Right ventricle myocardium inferior (tissue), 1 donor: ENCODE measurements at regions of chr7 and their contacts with region 1.

Region 1: GRCh38 chr7:876167-876967 is at the start of gene GET4:
- DNase-seq: peak; percentile 98
- ATAC-seq: peak; percentile 85
- total RNA-seq, gene GET4: 19.1 TPM

Region 2: GRCh38 chr7:322111-322671 is 554.2 kb before region 1 on chr7:
- intact Hi-C with region 1: loop called (anchors 10 kb)
- DNase-seq: peak; percentile 85
- ATAC-seq: peak; percentile 85

Region 3: GRCh38 chr7:542713-543500 is 333.5 kb before region 1 on chr7:
- intact Hi-C with region 1: no loop called
- DNase-seq: peak; percentile 69
- ATAC-seq: peak; percentile 33

Region 4: DNA sequence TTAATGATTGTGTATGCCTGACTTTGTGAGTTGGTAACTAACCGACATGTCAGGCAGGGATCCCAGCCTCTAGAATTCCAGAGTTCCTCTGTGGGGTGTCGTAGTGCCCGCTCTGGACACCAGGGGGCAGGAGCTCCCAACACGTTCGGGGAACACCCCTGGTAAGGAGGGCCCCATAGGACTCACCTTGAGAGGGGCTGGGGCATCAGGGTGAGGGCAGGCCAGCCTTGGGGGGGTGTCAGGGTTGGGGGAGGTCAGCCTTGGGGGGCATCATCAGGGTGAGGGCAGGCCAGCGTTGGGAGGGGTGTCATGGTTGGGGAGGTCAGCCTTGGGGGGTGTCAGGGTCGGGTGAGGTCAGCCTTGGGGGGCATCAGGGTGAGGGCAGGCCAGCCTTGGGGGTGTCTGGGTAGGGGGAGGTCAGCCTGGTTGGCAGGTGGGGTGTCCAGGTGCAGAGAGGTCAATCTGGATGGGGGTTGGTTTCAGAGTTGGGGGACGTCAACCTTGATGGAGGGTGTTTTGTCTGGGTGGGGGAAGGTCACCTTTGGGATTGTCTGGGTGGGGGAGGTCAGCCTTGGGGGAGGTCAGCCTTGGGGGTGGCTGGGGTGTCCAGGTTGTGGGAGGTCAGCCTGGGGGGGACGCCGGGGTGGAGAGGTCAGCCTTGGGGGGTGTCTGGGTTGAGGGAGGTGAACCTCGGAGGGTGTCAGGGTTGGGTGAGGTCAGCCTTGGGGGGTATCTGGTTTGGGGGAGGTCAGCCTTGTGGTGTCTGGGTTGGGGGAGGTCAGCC is 89.7 kb before region 1 on chr7:
- intact Hi-C with region 1: loop called (anchors 1 kb)
- DNase-seq: no peak
- ATAC-seq: peak; percentile 84

Region 5: GRCh38 chr7:821688-822087 is 54.7 kb before region 1 on chr7:
- intact Hi-C with region 1: loop called (anchors 5 kb)
- DNase-seq: no peak
- ATAC-seq: peak; percentile 70

Region 6: DNA sequence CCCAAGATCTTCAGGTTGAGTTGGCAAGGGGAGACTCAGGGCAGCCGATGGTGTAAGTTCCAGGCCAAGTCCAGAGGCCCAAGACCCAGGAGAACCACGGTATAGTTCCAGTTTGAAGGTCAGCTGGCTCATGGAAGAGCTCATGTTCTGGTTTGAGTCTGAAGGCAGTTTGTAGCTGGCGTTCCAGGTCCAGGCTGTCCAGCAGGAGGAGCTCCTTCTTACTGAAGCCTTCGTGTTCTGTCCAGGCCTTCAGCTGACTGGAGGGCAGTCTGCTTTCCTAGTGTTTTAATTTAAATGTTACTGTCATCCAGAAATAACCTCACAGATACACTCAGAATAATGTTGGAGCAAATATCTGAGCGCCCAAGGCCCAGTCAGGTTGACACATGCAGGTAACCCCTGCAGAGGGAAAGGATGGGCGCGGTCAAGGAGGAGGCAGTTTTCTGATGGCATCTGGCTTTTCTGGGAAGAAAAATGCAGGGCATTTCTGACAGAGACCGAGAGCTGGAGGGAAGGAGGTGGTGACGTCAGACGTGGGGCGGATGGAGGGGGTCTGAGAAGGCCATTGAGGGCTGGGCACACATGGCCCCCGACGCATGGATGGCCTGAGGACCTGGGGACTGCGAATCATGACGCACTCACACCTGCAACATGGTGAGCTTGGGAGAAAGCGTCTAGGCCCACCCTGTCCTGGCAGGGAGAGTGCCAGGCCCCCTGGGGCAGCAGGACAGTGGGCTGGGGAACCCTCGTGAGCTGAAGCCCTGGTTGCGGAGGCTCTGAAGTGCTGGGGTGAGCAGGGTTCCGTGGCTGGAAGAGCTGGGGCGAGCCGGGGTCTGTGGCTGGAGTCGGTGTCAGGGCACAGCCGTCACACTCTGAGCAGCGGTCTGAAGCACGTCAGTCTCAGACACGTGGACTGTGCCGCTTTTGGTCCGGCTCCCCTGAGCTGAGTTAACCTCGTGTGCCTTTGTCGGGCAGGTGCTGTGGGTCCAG is 39.7 kb before region 1 on chr7:
- intact Hi-C with region 1: loop called (anchors 5 kb)
- DNase-seq: no peak
- ATAC-seq: peak; percentile 58

Region 7: GRCh38 chr7:1015196-1016121 is 139.1 kb after region 1 on chr7:
- intact Hi-C with region 1: no loop called
- DNase-seq: peak; percentile 55
- ATAC-seq: no peak

Region 8: GRCh38 chr7:1187127-1187526 is 310.8 kb after region 1 on chr7:
- intact Hi-C with region 1: no loop called
- DNase-seq: no peak
- ATAC-seq: no peak